H1 (cell line): ENCODE measurements at regions of chr22 and their contacts with region 1.

Region 1: DNA sequence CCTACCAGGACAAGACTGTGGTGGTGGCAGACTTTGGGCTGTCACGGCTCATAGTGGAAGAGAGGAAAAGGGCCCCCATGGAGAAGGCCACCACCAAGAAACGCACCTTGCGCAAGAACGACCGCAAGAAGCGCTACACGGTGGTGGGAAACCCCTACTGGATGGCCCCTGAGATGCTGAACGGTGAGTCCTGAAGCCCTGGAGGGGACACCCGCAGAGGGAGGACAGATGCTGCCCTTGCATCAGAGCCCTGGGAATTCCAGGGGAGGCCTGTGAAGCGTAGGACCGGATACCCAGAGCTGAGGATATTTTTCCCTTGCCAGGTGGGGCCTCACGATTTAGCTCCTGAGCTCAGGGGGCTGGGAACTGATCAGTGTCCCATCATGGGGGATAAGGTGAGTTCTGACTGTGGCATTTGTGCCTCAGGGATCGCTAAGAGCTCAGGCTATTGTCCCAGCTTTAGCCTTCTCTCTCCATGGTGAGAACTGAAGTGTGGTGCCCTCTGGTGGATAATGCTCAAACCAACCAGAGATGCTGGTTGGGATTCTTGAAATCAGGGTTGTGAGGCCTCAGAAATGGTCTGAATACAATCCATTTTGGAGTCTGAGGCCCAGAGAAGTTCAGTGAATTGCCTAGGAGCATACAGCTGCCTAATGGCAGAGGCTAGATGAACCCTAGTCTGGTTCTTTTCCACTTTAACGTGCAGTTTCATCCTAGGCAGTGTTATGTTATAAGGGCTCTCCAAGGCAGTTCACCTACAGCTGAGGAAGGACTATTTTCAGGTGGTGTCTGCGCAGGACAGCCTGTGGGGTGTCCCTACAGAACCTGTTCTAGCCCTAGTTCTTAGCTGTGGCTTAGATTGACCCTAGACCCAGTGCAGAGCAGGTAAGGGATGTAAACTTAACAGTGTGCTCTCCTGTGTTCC is 19.5 kb downstream of the PIK3IP1 start:
- DNase-seq: peak in 1 of 2 experiments; percentile 77
- H3K4me3 ChIP-seq: no peak overlapping the region
- H3K27ac ChIP-seq: no peak overlapping the region
- H3K4me1 ChIP-seq: peaks cover 0 to 13% (median 5%) of the 10 kb centered on the region in 4 experiments; a peak in 4 of 7 replicates
- H3K27me3 ChIP-seq: no peaks in the 10 kb centered on the region
- CTCF ChIP-seq: peak in 2 of 3 experiments; percentile 85 to 88; a peak in 3 of 4 replicates
- EP300 ChIP-seq: no peak
- POLR2A ChIP-seq: no peak
- RAD21 ChIP-seq: peak; percentile 81 to 90

Region 2: DNA sequence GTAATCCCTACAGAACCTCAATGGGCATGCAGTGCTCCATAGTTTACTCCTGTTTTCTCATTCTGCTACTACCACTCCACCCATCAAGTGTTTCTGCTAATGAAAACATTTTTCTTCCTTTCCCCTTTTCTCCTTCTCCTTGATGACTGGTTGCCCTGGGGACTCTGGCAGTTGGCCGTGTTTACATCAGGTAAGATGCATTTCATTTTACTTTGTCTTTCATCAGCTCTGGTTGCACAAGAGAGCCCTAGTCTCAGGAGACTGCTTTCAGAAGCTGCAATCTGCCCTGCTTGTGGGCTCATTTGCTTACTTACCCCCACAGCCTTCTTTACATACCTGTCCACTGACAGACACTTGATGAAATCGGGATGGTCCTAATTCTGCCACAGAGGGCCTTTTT is 80.3 kb before region 1 on chr22:
- CTCF ChIA-PET with region 1: interaction called, 18 read pairs
- POLR2A ChIA-PET with region 1: no interaction called
- DNase-seq: no peak
- H3K4me3 ChIP-seq: no peak overlapping the region
- H3K27ac ChIP-seq: no peak overlapping the region
- H3K4me1 ChIP-seq: no peaks in the 10 kb centered on the region
- H3K27me3 ChIP-seq: no peaks in the 10 kb centered on the region
- CTCF ChIP-seq: no peak
- EP300 ChIP-seq: no peak
- POLR2A ChIP-seq: no peak
- RAD21 ChIP-seq: no peak

Region 3: DNA sequence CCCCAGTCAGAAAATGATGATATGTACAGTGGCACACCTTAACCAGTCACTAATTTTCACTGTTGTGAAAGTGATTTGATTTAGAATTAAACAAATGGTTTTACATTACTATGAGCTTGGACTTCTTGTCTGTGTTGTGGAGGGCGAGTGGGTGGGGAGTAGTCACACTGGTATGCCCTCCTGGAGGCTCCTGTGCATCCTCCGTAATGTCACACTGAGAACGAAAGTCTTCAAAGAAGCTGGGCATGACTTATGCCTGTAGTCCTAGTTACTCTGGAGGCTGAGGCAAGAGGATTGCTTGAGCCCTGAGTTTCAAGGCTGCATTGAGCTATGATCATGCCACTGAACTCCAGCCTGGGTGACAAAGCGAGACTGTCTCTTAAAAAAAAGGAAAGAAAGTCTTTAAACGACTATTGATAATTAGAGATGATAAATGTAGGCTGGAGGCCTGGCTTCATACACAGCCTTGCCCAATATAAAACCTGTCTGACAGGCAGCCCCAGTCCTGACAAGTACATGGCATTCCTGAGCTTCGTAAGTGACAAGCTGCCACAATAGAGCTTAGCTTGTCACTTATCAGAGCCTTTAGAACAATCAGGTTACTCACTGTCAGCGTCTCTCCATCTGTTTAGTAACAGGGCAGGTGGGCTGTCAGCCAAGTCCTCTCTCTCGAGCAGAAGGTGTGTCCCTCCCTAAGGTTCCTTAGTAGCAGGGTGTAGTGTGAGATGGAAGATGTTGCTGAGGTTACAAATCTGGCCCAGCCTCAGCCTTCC is 65.7 kb before region 1 on chr22:
- CTCF ChIA-PET with region 1: interaction called, 88 read pairs
- POLR2A ChIA-PET with region 1: interaction called, 30 read pairs
- DNase-seq: no peak
- H3K4me3 ChIP-seq: no peak overlapping the region
- H3K27ac ChIP-seq: no peak overlapping the region
- H3K4me1 ChIP-seq: peaks cover 0 to 2% (median under 1%) of the 10 kb centered on the region in 4 experiments; a peak in 1 of 7 replicates
- H3K27me3 ChIP-seq: no peaks in the 10 kb centered on the region
- CTCF ChIP-seq: no peak
- EP300 ChIP-seq: no peak
- POLR2A ChIP-seq: no peak
- RAD21 ChIP-seq: no peak

Region 4: GRCh38 chr22:31218565-31219262 is 54.1 kb before region 1 on chr22:
- CTCF ChIA-PET with region 1: interaction called, 88 read pairs
- POLR2A ChIA-PET with region 1: interaction called, 30 read pairs
- DNase-seq: no peak
- H3K4me3 ChIP-seq: no peak overlapping the region
- H3K27ac ChIP-seq: no peak overlapping the region
- H3K4me1 ChIP-seq: no peaks in the 10 kb centered on the region; a peak in 2 of 7 replicates
- H3K27me3 ChIP-seq: no peaks in the 10 kb centered on the region
- CTCF ChIP-seq: no peak
- EP300 ChIP-seq: no peak
- POLR2A ChIP-seq: no peak
- RAD21 ChIP-seq: no peak

Region 5: DNA sequence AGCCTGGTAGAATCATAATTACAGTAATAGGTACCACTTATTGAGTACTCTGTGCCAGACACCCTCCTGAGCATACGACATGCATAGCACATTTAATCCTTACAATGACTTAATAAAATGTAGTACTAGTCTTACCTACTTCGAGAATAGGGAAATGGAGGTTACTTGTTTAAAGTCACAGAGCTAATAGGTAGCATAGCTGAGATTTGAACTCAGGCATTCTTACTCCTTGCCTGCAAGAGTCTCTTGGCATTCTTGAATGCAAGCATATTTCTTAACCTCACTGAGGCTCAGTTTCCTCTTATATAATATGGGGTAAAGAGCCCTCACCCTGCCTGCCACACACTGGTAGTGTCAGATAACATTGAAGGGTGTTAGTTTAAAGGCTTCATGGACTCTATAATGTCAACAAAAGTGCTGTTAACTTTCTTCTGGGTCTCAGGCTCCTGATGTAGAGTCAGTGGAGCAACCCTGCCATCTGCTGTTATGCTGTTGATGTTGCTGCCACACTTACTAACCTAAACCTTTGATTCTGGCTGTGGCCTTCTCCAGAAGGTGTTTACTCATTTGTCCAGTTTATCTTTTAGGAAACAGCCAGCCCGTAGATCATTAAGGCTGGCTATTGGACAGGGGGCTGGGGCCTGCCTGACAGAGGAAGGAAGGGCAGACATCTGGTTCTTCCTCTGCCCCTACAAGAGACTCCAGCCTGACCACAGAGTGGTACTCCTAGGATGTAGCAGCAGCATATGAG is 41.7 kb before region 1 on chr22:
- CTCF ChIA-PET with region 1: interaction called, 28 read pairs
- POLR2A ChIA-PET with region 1: interaction called, 4 read pairs
- DNase-seq: no peak
- H3K4me3 ChIP-seq: no peak overlapping the region
- H3K27ac ChIP-seq: no peak overlapping the region
- H3K4me1 ChIP-seq: peaks cover 0 to 5% (median 2%) of the 10 kb centered on the region in 4 experiments; a peak in 3 of 7 replicates
- H3K27me3 ChIP-seq: no peaks in the 10 kb centered on the region
- CTCF ChIP-seq: peak in 2 of 3 experiments; percentile 33 to 43; a peak in 3 of 4 replicates
- EP300 ChIP-seq: no peak
- POLR2A ChIP-seq: no peak
- RAD21 ChIP-seq: peak; percentile 54 to 62

Region 6: GRCh38 chr22:31253949-31254348 is 18.8 kb before region 1 on chr22:
- CTCF ChIA-PET with region 1: interaction called, 122 read pairs
- POLR2A ChIA-PET with region 1: interaction called, 4 read pairs
- DNase-seq: no peak
- H3K4me3 ChIP-seq: no peak overlapping the region
- H3K27ac ChIP-seq: peak overlapping the region; percentile 17; the same call in 1 of the 2 replicates
- H3K4me1 ChIP-seq: peaks cover 0 to 7% (median 1%) of the 10 kb centered on the region in 4 experiments; a peak in 2 of 7 replicates
- H3K27me3 ChIP-seq: no peaks in the 10 kb centered on the region
- CTCF ChIP-seq: peak in 1 of 3 experiments; percentile 15; a peak in 1 of 4 replicates
- EP300 ChIP-seq: no peak
- POLR2A ChIP-seq: no peak
- RAD21 ChIP-seq: peak; percentile 24 to 33; a peak in 3 of 4 replicates

Region 7: DNA sequence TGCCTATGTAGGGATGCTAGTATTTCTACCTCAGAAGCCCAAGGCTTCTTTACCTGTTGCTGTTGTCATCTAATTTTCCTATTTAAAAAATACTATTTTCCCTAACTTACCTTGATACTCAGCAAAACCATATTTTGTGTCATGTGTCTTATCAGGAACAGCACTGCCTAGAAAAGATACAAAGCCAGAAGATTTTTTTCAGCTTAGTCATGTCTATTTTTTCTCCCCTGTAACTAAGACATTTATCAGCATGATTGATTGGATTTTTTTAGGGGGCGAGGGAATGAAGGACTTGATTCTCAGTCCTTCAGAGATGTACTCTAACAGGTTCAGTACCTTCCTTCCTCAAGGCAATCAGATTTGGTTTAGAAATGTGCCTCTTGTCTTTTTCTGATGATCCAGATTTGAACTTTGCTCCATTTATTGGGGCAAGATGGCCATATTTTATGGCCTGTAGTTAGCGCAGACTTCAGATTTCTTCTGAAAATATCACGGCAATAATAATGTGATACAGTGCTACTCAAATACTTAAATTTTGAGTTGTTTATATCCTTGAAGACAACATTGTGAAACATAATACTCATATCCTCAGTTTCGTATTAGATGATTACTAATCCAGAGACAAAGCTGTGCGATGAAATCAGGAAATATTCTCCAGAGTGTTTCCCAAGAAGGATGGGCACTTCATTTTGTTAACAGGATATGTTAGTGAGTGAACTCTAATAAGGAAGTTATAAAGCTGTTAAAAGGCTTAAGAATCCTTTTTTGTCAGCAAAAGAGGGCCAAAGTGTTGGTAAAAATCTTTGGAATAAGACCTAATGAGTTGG is 23.3 kb after region 1 on chr22:
- CTCF ChIA-PET with region 1: interaction called, 25 read pairs
- POLR2A ChIA-PET with region 1: interaction called, 3 read pairs
- DNase-seq: no peak
- H3K4me3 ChIP-seq: no peak overlapping the region
- H3K27ac ChIP-seq: no peak overlapping the region
- H3K4me1 ChIP-seq: peaks cover 0 to 9% (median 4%) of the 10 kb centered on the region in 4 experiments; a peak in 4 of 7 replicates
- H3K27me3 ChIP-seq: peaks cover 4 to 11% (median 9%) of the 10 kb centered on the region in 4 experiments; a peak in 6 of 7 replicates
- CTCF ChIP-seq: no peak
- EP300 ChIP-seq: no peak
- POLR2A ChIP-seq: no peak
- RAD21 ChIP-seq: no peak

Region 8: DNA sequence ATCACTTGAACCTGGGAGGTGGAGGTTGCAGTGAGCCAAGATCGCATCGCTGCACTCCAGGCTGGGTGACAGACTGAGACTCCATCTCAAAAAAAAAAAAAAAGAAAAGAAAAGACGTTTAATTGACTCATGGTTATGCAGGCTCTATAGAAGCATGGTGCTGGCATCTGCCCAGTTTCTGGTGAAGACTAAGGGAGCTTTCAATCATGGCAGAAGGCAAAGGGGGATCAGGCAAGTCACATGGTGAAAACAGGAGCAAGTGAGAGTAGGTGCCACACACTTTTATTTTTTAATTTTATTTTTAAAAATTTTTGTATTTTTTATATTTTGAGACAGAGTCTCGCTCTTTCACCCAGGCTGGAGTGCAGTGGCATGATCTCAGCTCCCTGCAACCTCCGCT is 81.7 kb after region 1 on chr22:
- CTCF ChIA-PET with region 1: no interaction called
- POLR2A ChIA-PET with region 1: no interaction called
- DNase-seq: no peak
- H3K4me3 ChIP-seq: no peak overlapping the region
- H3K27ac ChIP-seq: no peak overlapping the region
- H3K4me1 ChIP-seq: peaks cover 0 to 2% (median 0%) of the 10 kb centered on the region in 4 experiments; a peak in 2 of 7 replicates
- H3K27me3 ChIP-seq: no peaks in the 10 kb centered on the region
- CTCF ChIP-seq: no peak
- EP300 ChIP-seq: no peak
- POLR2A ChIP-seq: no peak
- RAD21 ChIP-seq: no peak